Gastrocnemius medialis (tissue), 4 donors: ENCODE measurements at regions of chr9 and their contacts with region 1.

Region 1: GRCh38 chr9:96540106-96540505 is 79.5 kb downstream of the CDC14B start:
- DNase-seq: no peak
- ATAC-seq: no peak
- H3K4me3 ChIP-seq: no peak overlapping the region
- H3K27ac ChIP-seq: no peak overlapping the region
- H3K4me1 ChIP-seq: no peaks in the 10 kb centered on the region
- H3K27me3 ChIP-seq: no peaks in the 10 kb centered on the region
- CTCF ChIP-seq: no peak
- POLR2A ChIP-seq: no peak

Region 2: DNA sequence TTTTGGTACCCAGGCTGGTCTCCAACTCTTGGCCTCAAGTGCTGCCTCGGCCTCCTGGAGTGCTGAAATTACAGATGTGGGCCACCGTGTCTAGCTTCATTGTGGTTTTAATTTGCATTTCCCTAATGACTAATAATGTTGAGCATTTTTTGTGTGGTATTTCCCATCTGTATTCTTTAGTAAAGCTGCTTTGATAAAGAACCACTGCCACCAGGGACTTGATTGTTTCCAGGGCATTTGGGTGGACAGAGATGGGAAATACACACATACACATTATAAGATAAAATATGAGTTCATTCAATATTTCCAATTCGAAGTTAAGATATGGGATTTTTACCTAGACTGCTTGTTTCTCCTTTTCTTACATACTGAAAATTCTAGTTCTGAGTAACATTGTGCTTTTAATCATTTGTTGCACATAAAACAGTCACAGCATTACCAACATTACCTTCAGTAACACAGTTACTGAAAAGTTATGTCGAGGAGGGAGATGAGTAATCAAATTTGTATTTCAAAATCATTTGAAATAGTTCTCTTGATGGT is 61.2 kb before region 1 on chr9:
- in situ Hi-C with region 1: loop called in 1 of 4 experiments (anchors 10 kb)
- intact Hi-C with region 1: no loop called
- DNase-seq: no peak
- ATAC-seq: no peak
- H3K4me3 ChIP-seq: no peak overlapping the region
- H3K27ac ChIP-seq: no peak overlapping the region
- H3K4me1 ChIP-seq: no peaks in the 10 kb centered on the region
- H3K27me3 ChIP-seq: no peaks in the 10 kb centered on the region
- CTCF ChIP-seq: no peak
- POLR2A ChIP-seq: no peak

Region 3: GRCh38 chr9:96604004-96604319 is 63.9 kb after region 1 on chr9:
- in situ Hi-C with region 1: no loop called
- intact Hi-C with region 1: no loop called
- DNase-seq: peak; percentile 46 to 62
- ATAC-seq: peak; percentile 94 to 95
- H3K4me3 ChIP-seq: peak overlapping the region; percentile 10 to 37 (median 27)
- H3K27ac ChIP-seq: peak overlapping the region; percentile 73 to 84 (median 78)
- H3K4me1 ChIP-seq: peaks cover 7 to 13% of the 10 kb centered on the region in 2 donors
- H3K27me3 ChIP-seq: no peaks in the 10 kb centered on the region
- CTCF ChIP-seq: no peak
- POLR2A ChIP-seq: no peak